ENCODE measurements at regions of chr7 and their contacts with region 1.

Region 1: GRCh38 chr7:98106647-98107445 is at the start of gene LMTK2:
- DNase-seq: peak; percentile 78
- H3K4me3 ChIP-seq: peak within 1 kb of the TSS; percentile 80
- H3K27ac ChIP-seq: no peak within 1 kb of the TSS
- H3K27me3 ChIP-seq: no peaks in the 10 kb centered on the region
- CTCF ChIP-seq: peak; percentile 93
- polyA plus RNA-seq, gene LMTK2: 3.7 TPM in 2 replicates

Region 2: DNA sequence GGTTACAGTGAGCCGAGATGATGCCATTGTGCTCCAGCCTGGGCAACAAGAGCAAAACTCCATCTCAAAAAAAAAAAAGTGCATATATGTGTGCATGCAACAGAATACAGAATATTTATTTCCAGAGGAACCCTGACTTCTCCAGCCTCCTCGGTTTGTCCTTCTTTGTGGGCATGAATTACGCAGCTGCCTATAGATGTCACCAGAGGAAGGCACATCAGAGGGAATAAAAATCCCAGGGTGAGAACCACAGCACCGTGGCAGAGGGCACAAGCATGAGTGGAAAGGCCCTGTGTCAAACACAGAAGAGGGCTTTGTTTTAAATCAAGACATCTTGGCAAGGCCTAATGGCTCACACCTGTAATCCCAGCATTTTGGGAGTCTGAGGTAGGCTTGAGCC is 92.5 kb before region 1 on chr7:
- CTCF ChIA-PET with region 1: no interaction called
- POLR2A ChIA-PET with region 1: no interaction called
- DNase-seq: no peak
- H3K4me3 ChIP-seq: no peak overlapping the region
- H3K27ac ChIP-seq: no peak overlapping the region
- H3K27me3 ChIP-seq: no peaks in the 10 kb centered on the region
- CTCF ChIP-seq: no peak

Region 3: DNA sequence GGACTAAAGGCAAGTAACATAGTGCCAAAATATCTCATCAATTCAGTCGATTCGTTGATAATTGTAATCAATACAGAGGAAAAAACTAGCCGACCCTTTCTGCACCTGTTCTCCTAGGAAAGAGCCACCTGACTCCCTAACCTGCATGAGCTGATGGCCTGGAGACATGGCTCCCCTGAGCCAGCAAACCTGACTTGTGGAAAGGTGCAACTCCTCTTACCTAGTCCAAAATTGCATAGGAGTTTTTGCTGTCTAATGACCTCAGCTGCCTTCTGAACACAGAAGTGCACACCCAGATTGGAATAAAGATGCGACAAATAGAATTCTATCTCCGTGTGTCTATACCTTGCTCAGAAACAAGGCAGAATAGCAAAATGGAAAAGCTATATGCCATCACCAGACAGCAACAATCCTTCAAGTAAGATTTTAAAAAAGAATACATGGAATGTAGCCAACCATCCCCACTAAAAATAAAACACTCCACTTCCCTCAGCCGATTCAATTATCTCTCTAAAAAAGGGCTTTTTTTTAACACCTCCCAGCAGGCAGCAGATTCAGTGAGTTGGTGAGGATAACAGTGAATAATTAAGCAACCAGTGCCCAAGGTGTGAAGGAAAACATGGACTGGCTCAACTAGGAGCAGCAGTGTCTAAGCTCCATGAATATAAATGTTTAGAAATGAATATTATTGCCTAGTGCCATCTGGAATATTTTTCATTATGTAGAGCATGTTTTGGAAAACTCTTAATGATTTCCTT is 26.8 kb before region 1 on chr7:
- CTCF ChIA-PET with region 1: no interaction called
- POLR2A ChIA-PET with region 1: no interaction called
- DNase-seq: no peak
- H3K4me3 ChIP-seq: no peak overlapping the region
- H3K27ac ChIP-seq: no peak overlapping the region
- H3K27me3 ChIP-seq: no peaks in the 10 kb centered on the region
- CTCF ChIP-seq: no peak

Region 4: GRCh38 chr7:98119256-98119918 is 12.5 kb after region 1 on chr7:
- CTCF ChIA-PET with region 1: interaction called, 46 read pairs
- POLR2A ChIA-PET with region 1: no interaction called
- DNase-seq: peak; percentile 16
- H3K4me3 ChIP-seq: no peak overlapping the region
- H3K27ac ChIP-seq: peak overlapping the region; percentile 31
- H3K27me3 ChIP-seq: no peaks in the 10 kb centered on the region
- CTCF ChIP-seq: no peak

Region 5: GRCh38 chr7:98133181-98133580 is 26.3 kb after region 1 on chr7:
- CTCF ChIA-PET with region 1: interaction called, 21 read pairs
- POLR2A ChIA-PET with region 1: no interaction called
- DNase-seq: no peak
- H3K4me3 ChIP-seq: no peak overlapping the region
- H3K27ac ChIP-seq: no peak overlapping the region
- H3K27me3 ChIP-seq: no peaks in the 10 kb centered on the region
- CTCF ChIP-seq: no peak

Region 6: DNA sequence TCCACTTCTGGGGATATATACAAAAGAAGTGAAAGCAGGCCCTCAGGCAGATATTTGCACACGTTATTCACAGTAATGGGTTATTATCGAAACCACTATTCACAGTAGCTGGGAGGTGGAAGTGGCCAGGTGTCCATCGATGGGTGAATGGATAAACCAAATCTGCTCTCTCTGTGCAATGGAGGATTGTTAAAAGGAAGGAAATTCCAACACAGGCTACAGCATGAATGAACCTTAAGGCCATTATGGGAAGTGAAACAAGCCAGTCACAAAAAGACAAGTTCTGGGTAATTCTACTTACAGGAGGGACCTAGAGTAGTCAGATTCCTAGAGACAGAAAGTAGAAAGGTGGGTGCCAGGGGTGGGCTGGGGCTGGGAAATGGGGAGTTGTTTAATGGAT is 55.9 kb after region 1 on chr7:
- CTCF ChIA-PET with region 1: interaction called, 154 read pairs
- POLR2A ChIA-PET with region 1: interaction called, 5 read pairs
- DNase-seq: no peak
- H3K4me3 ChIP-seq: no peak overlapping the region
- H3K27ac ChIP-seq: no peak overlapping the region
- H3K27me3 ChIP-seq: no peaks in the 10 kb centered on the region
- CTCF ChIP-seq: no peak

Region 7: DNA sequence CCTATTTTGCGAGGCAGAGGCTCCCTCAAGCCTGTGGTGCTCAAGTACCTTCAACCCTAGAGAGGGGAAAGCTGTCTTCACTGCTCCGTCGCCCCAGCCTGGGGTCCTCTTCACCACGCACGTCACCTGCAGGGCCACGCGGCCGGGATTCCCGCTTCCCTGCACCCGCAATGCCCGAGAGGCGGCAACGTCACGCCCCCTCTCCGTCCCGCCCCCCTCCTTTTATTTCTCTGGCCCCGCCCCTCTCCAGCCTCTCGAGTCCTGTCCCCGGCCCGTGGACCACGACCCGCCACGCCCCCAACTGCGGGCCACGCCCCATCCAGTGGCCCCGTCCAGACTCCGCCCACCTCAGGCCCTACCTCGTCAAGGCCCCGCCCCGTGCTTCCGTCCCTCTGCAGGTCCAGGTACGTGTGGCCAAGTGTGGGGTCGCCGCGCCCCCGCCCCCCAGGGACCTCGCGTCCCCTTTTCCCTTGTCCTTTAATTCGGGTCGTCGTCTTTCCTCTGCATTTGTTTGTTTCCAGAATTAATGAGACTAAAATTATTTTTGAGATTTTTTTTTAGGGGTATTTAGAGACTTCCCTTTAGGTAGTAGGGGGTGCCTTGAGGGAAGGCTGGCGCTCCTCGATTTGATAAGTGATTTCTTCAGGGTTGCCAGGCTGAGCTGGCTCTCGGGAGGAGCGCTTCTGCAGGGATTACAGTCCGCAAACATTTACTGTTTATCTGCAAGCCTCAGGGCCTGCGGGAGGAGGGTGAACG is 363.8 kb after region 1 on chr7:
- CTCF ChIA-PET with region 1: no interaction called
- POLR2A ChIA-PET with region 1: no interaction called
- DNase-seq: no peak
- H3K4me3 ChIP-seq: no peak overlapping the region
- H3K27ac ChIP-seq: no peak overlapping the region
- H3K27me3 ChIP-seq: peaks cover 2% of the 10 kb centered on the region
- CTCF ChIP-seq: no peak

Region 8: GRCh38 chr7:98647326-98647725 is 540.5 kb after region 1 on chr7:
- CTCF ChIA-PET with region 1: no interaction called
- POLR2A ChIA-PET with region 1: no interaction called
- DNase-seq: no peak
- H3K4me3 ChIP-seq: no peak overlapping the region
- H3K27ac ChIP-seq: no peak overlapping the region
- H3K27me3 ChIP-seq: no peaks in the 10 kb centered on the region
- CTCF ChIP-seq: no peak

Measured in AG04450 (cell line).